ENCODE measurements at regions of chr1 and their contacts with region 1.

Region 1: DNA sequence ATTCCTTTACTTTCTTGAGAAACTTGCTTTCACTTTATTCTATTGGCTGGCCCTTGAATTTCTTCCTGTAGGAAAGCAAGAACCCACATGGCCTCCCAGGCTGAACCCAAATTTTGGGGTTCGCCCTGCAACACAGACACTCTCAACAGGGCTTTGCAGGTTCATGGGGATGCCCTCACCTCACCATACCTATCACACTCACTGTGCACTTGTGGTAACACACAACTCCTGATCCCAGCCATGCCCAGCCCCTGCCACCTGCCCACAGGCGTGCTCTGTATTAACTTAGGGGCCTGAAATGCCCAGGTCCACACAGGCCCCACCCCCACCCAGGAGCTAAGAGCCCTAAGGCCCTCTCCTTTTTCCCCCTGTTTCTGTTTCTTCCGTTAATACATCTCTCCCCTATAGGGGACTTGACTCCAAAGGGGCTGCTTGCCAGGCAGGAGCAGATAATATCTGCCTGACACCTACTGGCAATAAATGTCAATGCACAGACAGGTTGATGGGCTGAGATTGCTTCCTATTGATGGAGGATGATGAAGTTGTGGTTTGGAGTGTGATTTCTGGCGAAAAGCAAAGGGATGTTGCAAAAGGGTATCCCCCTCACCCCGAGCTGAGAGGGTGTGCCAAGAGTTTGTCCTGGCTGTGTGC is 171.5 kb downstream of the AJAP1 start:
- DNase-seq: no peak
- ATAC-seq: no peak
- H3K4me3 ChIP-seq: no peak overlapping the region
- H3K27ac ChIP-seq: no peak overlapping the region
- H3K4me1 ChIP-seq: no peaks in the 10 kb centered on the region
- H3K27me3 ChIP-seq: peaks cover 0 to under 1% (median 0%) of the 10 kb centered on the region in 3 donors
- CTCF ChIP-seq: peak; percentile 17

Region 2: GRCh38 chr1:4652631-4653327 is 173.1 kb before region 1 on chr1:
- intact Hi-C with region 1: loop called in 1 of 2 experiments (anchors 10 kb)
- DNase-seq: peak; percentile 49 to 74
- ATAC-seq: peak; percentile 42 to 74 (median 58)
- H3K4me3 ChIP-seq: no peak overlapping the region
- H3K27ac ChIP-seq: no peak overlapping the region
- H3K4me1 ChIP-seq: no peaks in the 10 kb centered on the region
- H3K27me3 ChIP-seq: peaks cover 0 to 71% (median 25%) of the 10 kb centered on the region in 3 donors
- CTCF ChIP-seq: peak; percentile 78

Region 3: GRCh38 chr1:4778056-4778455 is 47.9 kb before region 1 on chr1:
- intact Hi-C with region 1: no loop called
- DNase-seq: no peak
- ATAC-seq: no peak
- H3K4me3 ChIP-seq: no peak overlapping the region
- H3K27ac ChIP-seq: no peak overlapping the region
- H3K4me1 ChIP-seq: no peaks in the 10 kb centered on the region
- H3K27me3 ChIP-seq: peaks cover 0 to 3% (median 0%) of the 10 kb centered on the region in 3 donors
- CTCF ChIP-seq: peak; percentile 8

Region 4: GRCh38 chr1:5329068-5329739 is 503.3 kb after region 1 on chr1:
- intact Hi-C with region 1: no loop called
- DNase-seq: no peak
- ATAC-seq: no peak
- H3K4me3 ChIP-seq: no peak overlapping the region
- H3K27ac ChIP-seq: no peak overlapping the region
- H3K4me1 ChIP-seq: no peaks in the 10 kb centered on the region
- H3K27me3 ChIP-seq: peaks cover 0 to 2% (median 0%) of the 10 kb centered on the region in 3 donors
- CTCF ChIP-seq: no peak